ENCODE measurements at regions of chr12 and their contacts with region 1.

Region 1: GRCh38 chr12:121443193-121443870 is 43.4 kb downstream of the RNF34 start:
- DNase-seq: peak; percentile 79
- ATAC-seq: peak; percentile 79
- H3K4me3 Mint-ChIP-seq: no peak overlapping the region
- H3K27ac Mint-ChIP-seq: peak overlapping the region; percentile 74
- H3K4me1 Mint-ChIP-seq: peaks cover 16% of the 10 kb centered on the region
- H3K27me3 Mint-ChIP-seq: no peaks in the 10 kb centered on the region
- CTCF ChIP-seq: peak; percentile 90

Region 2: GRCh38 chr12:121334513-121335343 is 108.6 kb before region 1 on chr12:
- CTCF ChIA-PET with region 1: interaction called, 80 read pairs
- POLR2A ChIA-PET with region 1: interaction called, 3 read pairs
- intact Hi-C with region 1: loop called (anchors 10 kb)
- DNase-seq: peak; percentile 8
- ATAC-seq: peak; percentile 88
- H3K4me3 Mint-ChIP-seq: no peak overlapping the region
- H3K27ac Mint-ChIP-seq: no peak overlapping the region
- H3K4me1 Mint-ChIP-seq: peaks cover 3% of the 10 kb centered on the region
- H3K27me3 Mint-ChIP-seq: no peaks in the 10 kb centered on the region
- CTCF ChIP-seq: peak; percentile 86

Region 3: DNA sequence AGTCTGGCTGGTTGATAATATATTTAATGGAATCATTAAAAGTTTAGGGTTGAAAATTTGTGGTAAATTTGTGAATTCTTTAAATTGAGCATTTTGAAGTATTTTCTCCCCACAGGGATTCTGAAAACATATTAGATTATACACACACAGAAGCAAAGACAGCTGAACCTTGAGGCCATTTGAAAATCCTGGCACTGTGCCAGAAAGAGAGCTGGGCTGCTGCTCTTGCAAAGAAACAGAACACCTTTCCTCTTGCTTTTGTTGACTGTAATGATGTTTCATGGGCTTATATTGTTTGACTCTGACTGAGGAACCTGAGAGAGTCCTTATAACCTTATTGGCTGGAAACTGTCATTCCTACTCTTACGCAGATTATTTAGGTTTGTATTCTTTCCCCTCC is 38.6 kb before region 1 on chr12:
- CTCF ChIA-PET with region 1: interaction called, 13 read pairs
- POLR2A ChIA-PET with region 1: interaction called, 4 read pairs
- intact Hi-C with region 1: no loop called
- DNase-seq: no peak
- ATAC-seq: no peak
- H3K4me3 Mint-ChIP-seq: no peak overlapping the region
- H3K27ac Mint-ChIP-seq: no peak overlapping the region
- H3K4me1 Mint-ChIP-seq: peaks cover 43% of the 10 kb centered on the region
- H3K27me3 Mint-ChIP-seq: no peaks in the 10 kb centered on the region
- CTCF ChIP-seq: no peak

Region 4: DNA sequence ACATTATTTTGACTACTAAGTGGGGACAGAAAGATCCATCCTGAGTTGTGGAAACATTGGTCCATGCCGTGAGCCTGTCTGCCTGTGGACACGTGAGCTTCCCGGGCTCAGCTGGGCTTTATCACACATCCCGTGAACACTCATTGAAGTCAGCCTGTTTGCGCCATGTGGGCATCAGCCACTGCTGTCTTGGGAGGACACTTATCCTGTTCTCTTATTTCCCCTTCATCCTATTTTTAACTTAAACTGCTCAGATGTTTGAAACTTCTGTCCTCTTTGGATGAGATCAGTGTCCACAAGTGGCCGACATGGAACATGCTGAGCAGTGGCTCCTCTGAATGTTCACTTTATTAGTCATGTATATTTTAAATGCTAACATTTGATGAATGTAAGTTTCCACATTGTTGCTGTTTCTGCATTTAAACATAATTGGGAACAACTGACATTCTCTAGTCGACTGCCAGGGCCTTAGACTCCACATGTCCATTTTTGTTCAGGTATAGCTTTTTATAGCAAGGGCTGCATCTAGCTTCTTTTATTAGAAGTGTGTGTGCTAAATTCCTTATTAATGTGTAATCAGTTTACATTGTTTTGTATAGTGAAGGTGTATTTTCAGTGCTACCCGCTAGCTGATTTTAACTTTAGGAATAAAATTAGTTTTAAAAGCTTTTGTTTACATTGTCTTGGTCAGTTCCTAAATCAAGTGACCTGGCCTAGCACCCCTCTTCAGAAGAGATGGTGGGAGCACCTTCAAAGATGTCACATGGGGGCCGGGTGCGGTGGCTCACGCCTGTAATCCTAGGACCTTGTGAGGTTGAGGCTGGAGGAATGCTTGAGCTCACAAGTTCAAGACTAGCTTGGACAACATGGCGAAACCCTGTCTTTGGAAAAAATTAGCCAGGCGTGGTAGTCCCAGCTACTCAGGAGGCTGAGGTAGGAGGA is 19.4 kb before region 1 on chr12:
- CTCF ChIA-PET with region 1: interaction called, 75 read pairs
- POLR2A ChIA-PET with region 1: interaction called, 4 read pairs
- intact Hi-C with region 1: no loop called
- DNase-seq: no peak
- ATAC-seq: no peak
- H3K4me3 Mint-ChIP-seq: no peak overlapping the region
- H3K27ac Mint-ChIP-seq: no peak overlapping the region
- H3K4me1 Mint-ChIP-seq: no peaks in the 10 kb centered on the region
- H3K27me3 Mint-ChIP-seq: no peaks in the 10 kb centered on the region
- CTCF ChIP-seq: no peak

Region 5: DNA sequence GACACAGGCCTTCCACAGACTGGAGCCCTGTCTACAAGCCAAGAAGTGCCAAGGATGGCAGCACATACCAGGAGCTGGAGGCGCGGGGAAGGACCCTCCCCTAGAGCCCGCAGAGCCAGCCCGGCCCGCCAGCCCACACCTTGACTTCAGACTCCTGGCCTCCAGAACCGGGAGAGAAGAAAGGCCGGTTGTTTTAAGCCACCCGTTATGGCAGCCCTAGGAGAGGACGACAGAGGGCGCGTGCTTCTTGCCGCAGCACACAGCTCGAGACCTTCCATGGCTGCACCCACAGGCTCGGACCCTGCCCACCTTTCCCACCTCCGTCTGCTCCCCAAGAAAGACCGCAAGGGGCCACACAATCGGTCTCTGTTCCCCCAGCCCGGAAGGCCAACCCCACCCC is 10.3 kb after region 1 on chr12:
- CTCF ChIA-PET with region 1: interaction called, 16 read pairs
- POLR2A ChIA-PET with region 1: interaction called, 3 read pairs
- intact Hi-C with region 1: no loop called
- DNase-seq: no peak
- ATAC-seq: no peak
- H3K4me3 Mint-ChIP-seq: no peak overlapping the region
- H3K27ac Mint-ChIP-seq: no peak overlapping the region
- H3K4me1 Mint-ChIP-seq: peaks cover 37% of the 10 kb centered on the region
- H3K27me3 Mint-ChIP-seq: no peaks in the 10 kb centered on the region
- CTCF ChIP-seq: no peak

Region 6: GRCh38 chr12:121467115-121467793 is 23.9 kb after region 1 on chr12:
- CTCF ChIA-PET with region 1: interaction called, 13 read pairs
- POLR2A ChIA-PET with region 1: interaction called, 5 read pairs
- intact Hi-C with region 1: no loop called
- DNase-seq: peak; percentile 90
- ATAC-seq: peak; percentile 92
- H3K4me3 Mint-ChIP-seq: peak overlapping the region; percentile 49
- H3K27ac Mint-ChIP-seq: no peak overlapping the region
- H3K4me1 Mint-ChIP-seq: peaks cover 26% of the 10 kb centered on the region
- H3K27me3 Mint-ChIP-seq: no peaks in the 10 kb centered on the region
- CTCF ChIP-seq: no peak

Region 7: GRCh38 chr12:121513464-121514183 is 70.3 kb after region 1 on chr12:
- CTCF ChIA-PET with region 1: no interaction called
- POLR2A ChIA-PET with region 1: no interaction called
- intact Hi-C with region 1: no loop called
- DNase-seq: peak; percentile 39
- ATAC-seq: peak; percentile 80
- H3K4me3 Mint-ChIP-seq: no peak overlapping the region
- H3K27ac Mint-ChIP-seq: peak overlapping the region; percentile 72
- H3K4me1 Mint-ChIP-seq: peaks cover 9% of the 10 kb centered on the region
- H3K27me3 Mint-ChIP-seq: no peaks in the 10 kb centered on the region
- CTCF ChIP-seq: no peak

Region 8: DNA sequence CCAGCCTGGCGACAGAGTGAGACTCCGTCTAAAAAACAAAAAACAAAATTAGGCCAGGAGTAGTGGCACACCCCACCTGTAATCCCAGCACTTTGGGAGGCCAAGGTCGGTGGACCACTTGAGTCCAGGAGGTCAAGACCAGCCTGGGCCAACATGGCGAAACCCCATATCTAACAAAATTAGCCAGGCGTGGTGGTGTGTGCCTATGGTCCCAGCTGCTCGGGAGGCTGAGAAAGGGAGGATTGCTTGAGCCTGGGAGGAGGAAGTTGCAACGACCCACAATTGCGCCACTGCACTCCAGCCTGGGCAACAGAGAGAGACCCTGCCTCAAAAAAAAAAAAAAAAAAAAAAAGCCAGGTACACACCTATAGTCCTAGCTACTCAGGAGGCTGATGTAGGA is 100.5 kb after region 1 on chr12:
- CTCF ChIA-PET with region 1: no interaction called
- POLR2A ChIA-PET with region 1: no interaction called
- intact Hi-C with region 1: no loop called
- DNase-seq: no peak
- ATAC-seq: no peak
- H3K4me3 Mint-ChIP-seq: no peak overlapping the region
- H3K27ac Mint-ChIP-seq: no peak overlapping the region
- H3K4me1 Mint-ChIP-seq: peaks cover 8% of the 10 kb centered on the region
- H3K27me3 Mint-ChIP-seq: no peaks in the 10 kb centered on the region
- CTCF ChIP-seq: no peak

Region 9: DNA sequence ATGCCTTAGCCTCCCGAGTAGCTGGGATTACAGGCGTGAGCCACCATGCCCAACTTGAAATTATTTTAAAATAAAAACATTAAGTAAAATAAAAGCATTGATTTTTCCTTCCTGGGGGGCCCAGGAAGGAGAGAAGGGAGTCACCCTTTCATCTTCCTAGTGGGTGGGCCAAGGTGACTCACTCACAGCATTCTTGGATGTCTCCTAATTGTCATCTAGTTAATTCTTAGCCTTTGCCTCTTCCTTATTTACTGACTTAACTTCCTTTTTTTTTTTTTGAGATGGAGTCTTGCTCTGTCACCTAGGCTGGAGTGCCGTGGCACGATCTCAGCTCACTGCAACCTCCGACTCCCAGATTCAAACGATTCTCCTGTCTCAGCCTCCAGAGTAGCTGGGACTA is 298.4 kb after region 1 on chr12:
- CTCF ChIA-PET with region 1: no interaction called
- POLR2A ChIA-PET with region 1: no interaction called
- intact Hi-C with region 1: no loop called
- DNase-seq: no peak
- ATAC-seq: no peak
- H3K4me3 Mint-ChIP-seq: no peak overlapping the region
- H3K27ac Mint-ChIP-seq: no peak overlapping the region
- H3K4me1 Mint-ChIP-seq: peaks cover 3% of the 10 kb centered on the region
- H3K27me3 Mint-ChIP-seq: no peaks in the 10 kb centered on the region
- CTCF ChIP-seq: no peak

Region 10: DNA sequence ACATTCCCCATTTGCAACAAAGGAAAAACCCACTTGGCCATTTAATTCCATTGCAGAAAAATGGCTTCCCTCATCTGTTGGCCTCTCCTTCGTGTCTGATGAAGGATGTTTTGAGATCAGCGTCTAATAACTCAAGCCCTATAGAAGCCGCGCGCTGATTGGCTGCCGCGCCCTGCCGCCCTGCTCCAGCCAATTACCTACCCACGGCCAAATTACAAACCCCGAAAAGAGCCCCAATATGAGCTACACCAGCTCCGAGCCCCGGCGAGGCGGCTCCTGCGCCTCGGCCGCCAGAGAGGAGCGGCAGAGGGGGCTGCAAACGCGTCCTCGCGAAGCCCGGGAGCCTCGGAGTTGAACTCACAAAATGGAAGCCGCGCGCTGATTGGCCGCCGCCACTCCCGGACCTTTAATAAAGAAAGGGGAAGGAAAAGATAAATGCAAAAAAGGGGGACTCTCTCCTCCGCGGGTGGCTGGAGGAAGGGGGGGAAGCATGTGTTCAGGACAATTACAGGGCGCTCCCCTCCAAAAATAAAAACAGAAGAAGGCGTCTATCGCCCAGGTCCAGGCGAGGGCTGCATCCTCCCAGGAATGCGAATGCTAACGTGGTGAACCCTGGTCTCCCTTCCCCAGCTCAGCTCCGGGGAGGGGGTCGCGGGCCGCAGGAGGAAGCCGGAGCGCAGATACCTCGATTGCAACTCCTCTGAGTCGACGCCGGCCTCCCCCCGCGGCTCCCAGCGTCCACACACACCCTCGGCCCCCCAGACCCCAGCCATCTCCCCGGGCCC is 359.7 kb after region 1 on chr12:
- CTCF ChIA-PET with region 1: no interaction called
- POLR2A ChIA-PET with region 1: no interaction called
- intact Hi-C with region 1: no loop called
- DNase-seq: peak; percentile 97
- ATAC-seq: peak; percentile 60
- H3K4me3 Mint-ChIP-seq: peak overlapping the region; percentile 83
- H3K27ac Mint-ChIP-seq: peak overlapping the region; percentile 99
- H3K4me1 Mint-ChIP-seq: peaks cover 26% of the 10 kb centered on the region
- H3K27me3 Mint-ChIP-seq: no peaks in the 10 kb centered on the region
- CTCF ChIP-seq: no peak